CD14-positive monocyte (primary cell): ENCODE measurements at regions of chr11 and their contacts with region 1.

Region 1: GRCh38 chr11:67082035-67082791 is 25.6 kb downstream of the RHOD start:
- DNase-seq: peak in 2 of 3 donors; percentile 16 to 25
- H3K4me3 ChIP-seq: peak overlapping the region in 1 of 3 experiments; percentile 25
- H3K4me3 Mint-ChIP-seq: peak overlapping the region; percentile 68 to 70
- H3K27ac ChIP-seq: no peak overlapping the region
- H3K27ac Mint-ChIP-seq: peak overlapping the region in 1 of 7 donors; percentile 66
- H3K4me1 ChIP-seq: peaks cover 28 to 34% of the 10 kb centered on the region in 2 donors
- H3K4me1 Mint-ChIP-seq: peaks cover 34% of the 10 kb centered on the region
- H3K27me3 ChIP-seq: peaks cover 0 to 8% of the 10 kb centered on the region in 2 donors
- H3K27me3 Mint-ChIP-seq: peaks cover 5 to 20% (median 14%) of the 10 kb centered on the region in 3 donors
- CTCF ChIP-seq: no peak

Region 2: GRCh38 chr11:67022328-67022927 is 59.8 kb before region 1 on chr11:
- intact Hi-C with region 1: no loop called
- DNase-seq: no peak
- H3K4me3 ChIP-seq: no peak overlapping the region
- H3K4me3 Mint-ChIP-seq: peak overlapping the region in 1 of 2 donors; percentile 86
- H3K27ac ChIP-seq: no peak overlapping the region
- H3K27ac Mint-ChIP-seq: no peak overlapping the region
- H3K4me1 ChIP-seq: peaks cover 0 to 5% of the 10 kb centered on the region in 2 donors
- H3K4me1 Mint-ChIP-seq: peaks cover 6% of the 10 kb centered on the region
- H3K27me3 ChIP-seq: peaks cover 25 to 60% of the 10 kb centered on the region in 2 donors
- H3K27me3 Mint-ChIP-seq: peaks cover 71 to 85% (median 77%) of the 10 kb centered on the region in 3 donors
- CTCF ChIP-seq: no peak

Region 3: GRCh38 chr11:67146516-67147226 is 64.5 kb after region 1 on chr11:
- intact Hi-C with region 1: loop called in 1 of 2 experiments (anchors 10 kb)
- DNase-seq: no peak
- H3K4me3 ChIP-seq: no peak overlapping the region
- H3K4me3 Mint-ChIP-seq: no peak overlapping the region
- H3K27ac ChIP-seq: no peak overlapping the region
- H3K27ac Mint-ChIP-seq: peak overlapping the region in 3 of 7 donors; percentile 16 to 62 (median 46)
- H3K4me1 ChIP-seq: no peaks in the 10 kb centered on the region
- H3K4me1 Mint-ChIP-seq: peaks cover 2% of the 10 kb centered on the region
- H3K27me3 ChIP-seq: no peaks in the 10 kb centered on the region
- H3K27me3 Mint-ChIP-seq: peaks cover 0 to 1% (median 0%) of the 10 kb centered on the region in 3 donors
- CTCF ChIP-seq: no peak

Region 4: GRCh38 chr11:67167086-67167485 is 84.9 kb after region 1 on chr11:
- intact Hi-C with region 1: loop called in 1 of 2 experiments (anchors 5 kb)
- DNase-seq: no peak
- H3K4me3 ChIP-seq: no peak overlapping the region
- H3K4me3 Mint-ChIP-seq: no peak overlapping the region
- H3K27ac ChIP-seq: peak overlapping the region in 1 of 2 donors; percentile 60
- H3K27ac Mint-ChIP-seq: peak overlapping the region in 4 of 7 donors; percentile 10 to 78 (median 57)
- H3K4me1 ChIP-seq: peaks cover 9 to 11% of the 10 kb centered on the region in 2 donors
- H3K4me1 Mint-ChIP-seq: peaks cover 30% of the 10 kb centered on the region
- H3K27me3 ChIP-seq: no peaks in the 10 kb centered on the region
- H3K27me3 Mint-ChIP-seq: peaks cover 0 to 2% (median 0%) of the 10 kb centered on the region in 3 donors
- CTCF ChIP-seq: no peak